ENCODE measurements at regions of chr3 and their contacts with region 1.

Region 1: DNA sequence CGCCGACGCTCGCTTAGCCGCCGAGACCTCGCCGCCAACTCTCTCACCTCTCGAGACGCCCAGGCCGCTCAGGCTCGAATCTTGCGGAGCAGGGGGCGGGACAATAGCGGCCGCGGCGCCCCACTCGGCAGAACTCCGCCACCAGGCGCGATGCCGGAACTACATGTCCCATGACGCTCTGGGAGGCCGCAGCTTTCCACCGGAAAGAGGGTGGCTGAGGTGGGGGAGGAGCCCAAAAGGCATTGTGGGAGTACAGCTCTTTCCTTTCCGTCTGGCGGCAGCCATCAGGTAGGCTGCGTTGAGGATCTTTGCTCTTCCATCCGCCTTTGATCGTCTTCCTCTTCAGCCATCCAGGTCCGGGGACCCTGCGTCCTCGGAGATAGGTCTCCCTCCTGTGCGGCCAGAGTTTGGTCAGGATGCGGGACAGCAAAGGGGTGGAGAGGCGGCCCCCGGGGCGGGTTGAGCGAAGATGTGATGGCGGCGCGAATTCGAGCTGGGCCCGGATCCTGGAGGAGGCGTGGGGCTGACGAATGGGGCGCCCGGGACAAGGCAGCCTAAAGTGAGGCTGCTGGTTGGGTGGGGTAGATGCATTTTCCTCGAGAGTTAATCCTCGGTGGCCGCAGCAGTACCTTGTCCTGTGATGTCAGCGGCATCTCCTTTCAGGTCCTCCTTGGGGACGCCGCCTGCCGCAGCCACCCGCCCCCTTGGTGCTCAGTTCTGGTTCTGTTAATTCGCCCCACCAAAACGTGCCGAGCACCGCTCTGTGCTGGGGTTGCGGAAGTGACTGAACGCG is at the starts of genes NKIRAS1 and RPL15:
- DNase-seq: peak; percentile 94 to 98
- ATAC-seq: peak; percentile 91 to 99 (median 94)
- H3K4me3 ChIP-seq: peak within 1 kb of the TSS; percentile 100
- H3K4me3 Mint-ChIP-seq: peak within 1 kb of the TSS; percentile 97
- H3K27ac ChIP-seq: peak within 1 kb of the TSS; percentile 86
- H3K27ac Mint-ChIP-seq: peak within 1 kb of the TSS; percentile 95 to 97
- H3K4me1 ChIP-seq: peaks cover 21% of the 10 kb centered on the region
- H3K4me1 Mint-ChIP-seq: peaks cover 38 to 42% of the 10 kb centered on the region in 2 donors
- H3K27me3 ChIP-seq: no peaks in the 10 kb centered on the region
- H3K27me3 Mint-ChIP-seq: peaks cover 0 to 2% of the 10 kb centered on the region in 2 donors
- CTCF ChIP-seq: no peak
- total RNA-seq, gene NKIRAS1: 2.2 to 3.3 (median 2.8) TPM
- total RNA-seq, gene RPL15: 1,116 to 1,338 (median 1,291) TPM

Region 2: DNA sequence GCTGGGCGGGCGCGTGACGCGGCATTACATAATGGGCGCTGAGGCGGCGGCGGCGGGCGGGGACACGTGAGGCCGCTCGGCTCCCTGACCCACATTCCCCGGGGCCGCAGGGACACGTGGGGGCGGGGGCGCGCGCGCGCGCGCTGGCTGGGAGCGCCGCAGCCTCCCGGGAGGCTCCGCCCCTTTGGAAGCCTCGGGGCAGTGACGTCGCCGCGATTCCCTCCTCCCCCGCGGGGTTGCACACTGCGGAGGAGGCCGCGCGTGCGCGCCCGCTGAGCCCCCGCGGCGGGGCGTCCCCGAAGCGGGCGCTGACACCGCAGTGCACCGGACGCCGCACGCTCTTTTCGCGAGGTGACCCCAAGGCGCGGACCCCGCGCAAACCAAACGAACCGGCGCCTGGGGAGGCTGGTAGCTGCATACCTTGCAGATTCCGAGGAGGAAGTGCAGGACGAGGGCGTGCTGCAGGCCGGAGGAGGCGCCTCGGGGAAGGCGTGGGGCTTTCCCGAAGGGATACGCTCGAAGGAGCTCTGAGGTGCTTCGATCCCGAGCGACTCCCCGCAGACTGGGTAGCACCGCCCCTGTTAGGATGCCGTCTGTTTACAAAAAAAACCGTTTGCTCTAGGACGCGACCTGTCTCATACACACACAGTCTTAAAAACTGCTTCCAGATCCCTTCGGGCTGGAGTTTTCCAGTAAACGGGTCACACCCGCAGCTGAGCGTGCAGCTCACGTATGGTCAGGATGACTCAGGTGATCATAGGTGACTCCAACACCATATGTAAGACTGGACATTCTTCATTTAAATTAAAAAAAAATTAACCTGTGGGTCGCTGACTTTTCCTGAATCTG is 29.0 kb after region 1 on chr3:
- intact Hi-C with region 1: loop called (anchors 1 kb)
- DNase-seq: peak; percentile 99
- ATAC-seq: peak; percentile 75 to 89 (median 76)
- H3K4me3 ChIP-seq: peak overlapping the region; percentile 82
- H3K4me3 Mint-ChIP-seq: peak overlapping the region; percentile 77
- H3K27ac ChIP-seq: peak overlapping the region; percentile 86
- H3K27ac Mint-ChIP-seq: peak overlapping the region; percentile 63 to 97
- H3K4me1 ChIP-seq: peaks cover 18% of the 10 kb centered on the region
- H3K4me1 Mint-ChIP-seq: peaks cover 39 to 41% of the 10 kb centered on the region in 2 donors
- H3K27me3 ChIP-seq: no peaks in the 10 kb centered on the region
- H3K27me3 Mint-ChIP-seq: no peaks in the 10 kb centered on the region
- CTCF ChIP-seq: no peak

Region 3: GRCh38 chr3:24802614-24803013 is 885.5 kb after region 1 on chr3:
- intact Hi-C with region 1: no loop called
- DNase-seq: no peak
- ATAC-seq: no peak
- H3K4me3 ChIP-seq: no peak overlapping the region
- H3K4me3 Mint-ChIP-seq: no peak overlapping the region
- H3K27ac ChIP-seq: no peak overlapping the region
- H3K27ac Mint-ChIP-seq: no peak overlapping the region
- H3K4me1 ChIP-seq: no peaks in the 10 kb centered on the region
- H3K4me1 Mint-ChIP-seq: no peaks in the 10 kb centered on the region
- H3K27me3 ChIP-seq: no peaks in the 10 kb centered on the region
- H3K27me3 Mint-ChIP-seq: peaks cover 2 to 6% of the 10 kb centered on the region in 2 donors
- CTCF ChIP-seq: no peak